PC-9 (cell line): ENCODE measurements at regions of chr7 and their contacts with region 1.

Region 1: GRCh38 chr7:80918909-80919662 is at the start of gene SEMA3C:
- DNase-seq: peak; percentile 89 to 98
- H3K4me3 ChIP-seq: peak within 1 kb of the TSS; percentile 86
- H3K27ac ChIP-seq: peak within 1 kb of the TSS; percentile 85
- H3K4me1 ChIP-seq: peaks cover 55% of the 10 kb centered on the region
- H3K27me3 ChIP-seq: no peaks in the 10 kb centered on the region
- CTCF ChIP-seq: no peak
- total RNA-seq, gene SEMA3C: 19.9 and 20.9 TPM in 2 replicates

Region 2: DNA sequence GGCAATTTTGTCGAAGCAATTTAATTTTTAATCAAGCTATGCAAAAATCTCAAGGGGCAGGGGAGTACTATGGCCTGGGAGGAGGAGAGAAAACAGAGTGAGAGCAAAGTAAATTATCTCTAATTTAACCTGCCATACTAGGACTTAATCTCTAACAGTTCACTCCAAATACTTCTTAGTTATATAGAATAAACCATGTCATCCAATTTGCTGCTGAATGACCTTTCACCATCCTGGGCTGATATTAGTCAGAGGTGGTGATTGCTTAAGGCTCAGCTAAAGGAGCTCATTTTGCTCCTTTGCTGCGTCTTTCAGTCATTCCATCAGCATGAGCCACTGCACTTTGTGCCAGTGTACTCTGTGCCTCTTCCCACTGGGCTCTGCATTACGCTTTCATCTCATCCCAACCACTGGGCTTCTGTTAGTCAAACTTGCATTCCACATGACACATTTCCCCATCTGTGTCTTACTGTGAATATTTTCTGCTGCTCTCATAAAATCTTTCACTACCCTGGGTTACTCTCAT is 196.4 kb before region 1 on chr7:
- CTCF ChIA-PET with region 1: interaction called, 9 read pairs
- POLR2A ChIA-PET with region 1: interaction called, 4 read pairs
- intact Hi-C with region 1: loop called (anchors 2 kb)
- DNase-seq: peak; percentile 85 to 99
- H3K4me3 ChIP-seq: peak overlapping the region; percentile 20
- H3K27ac ChIP-seq: peak overlapping the region; percentile 89
- H3K4me1 ChIP-seq: peaks cover 38% of the 10 kb centered on the region
- H3K27me3 ChIP-seq: no peaks in the 10 kb centered on the region
- CTCF ChIP-seq: no peak

Region 3: GRCh38 chr7:80883188-80884025 is 35.7 kb before region 1 on chr7:
- CTCF ChIA-PET with region 1: interaction called, 3 read pairs
- POLR2A ChIA-PET with region 1: interaction called, 4 read pairs
- intact Hi-C with region 1: loop called (anchors 1 kb)
- DNase-seq: peak; percentile 66 to 99
- H3K4me3 ChIP-seq: no peak overlapping the region
- H3K27ac ChIP-seq: peak overlapping the region; percentile 82
- H3K4me1 ChIP-seq: peaks cover 32% of the 10 kb centered on the region
- H3K27me3 ChIP-seq: no peaks in the 10 kb centered on the region
- CTCF ChIP-seq: no peak

Region 4: GRCh38 chr7:81161458-81162075 is 242.5 kb after region 1 on chr7:
- CTCF ChIA-PET with region 1: no interaction called
- POLR2A ChIA-PET with region 1: no interaction called
- intact Hi-C with region 1: loop called (anchors 1 kb)
- DNase-seq: peak; percentile 54 to 66
- H3K4me3 ChIP-seq: no peak overlapping the region
- H3K27ac ChIP-seq: no peak overlapping the region
- H3K4me1 ChIP-seq: peaks cover 10% of the 10 kb centered on the region; the same call in 1 of the 2 replicates
- H3K27me3 ChIP-seq: no peaks in the 10 kb centered on the region
- CTCF ChIP-seq: no peak

Region 5: DNA sequence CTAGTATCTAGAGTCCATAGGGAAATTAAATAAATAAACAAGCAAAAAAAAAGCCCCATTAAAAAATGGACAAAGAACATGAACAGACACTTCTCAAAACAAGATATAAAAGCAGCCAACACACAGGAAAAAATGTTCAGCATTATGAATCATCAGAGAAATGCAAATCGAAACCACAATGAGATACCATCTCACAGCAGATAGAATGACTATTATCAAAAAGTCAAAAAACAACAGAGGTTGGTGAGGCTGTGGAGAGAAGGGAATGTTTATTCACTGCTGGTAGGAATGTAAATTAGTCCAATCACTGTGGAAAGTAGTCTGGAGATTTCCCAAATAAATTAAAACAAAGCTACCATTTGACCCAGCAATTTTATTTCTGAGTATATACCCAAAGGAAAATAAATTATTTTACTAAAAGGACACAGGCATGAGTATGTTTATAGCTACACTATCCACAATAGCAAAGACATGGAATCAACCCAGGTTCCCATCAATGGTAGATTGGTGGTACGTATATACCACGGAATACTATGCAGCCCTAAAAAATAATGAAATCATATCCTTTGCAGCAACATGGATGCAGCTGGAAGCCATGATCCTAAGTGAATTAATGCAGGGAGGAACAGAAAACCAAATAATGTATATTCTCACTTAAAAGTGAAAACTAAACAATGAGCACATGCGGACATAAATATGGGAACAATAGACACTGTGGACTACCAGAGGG is 366.2 kb after region 1 on chr7:
- CTCF ChIA-PET with region 1: no interaction called
- POLR2A ChIA-PET with region 1: no interaction called
- intact Hi-C with region 1: loop called (anchors 2 kb)
- DNase-seq: peak; percentile 9 to 68
- H3K4me3 ChIP-seq: no peak overlapping the region
- H3K27ac ChIP-seq: peak overlapping the region; percentile 47
- H3K4me1 ChIP-seq: peaks cover 10% of the 10 kb centered on the region
- H3K27me3 ChIP-seq: no peaks in the 10 kb centered on the region
- CTCF ChIP-seq: no peak